CD4-positive, alpha-beta memory T cell (primary cell): ENCODE measurements at regions of chr2 and their contacts with region 1.

Region 1: GRCh38 chr2:172555522-172556283 is at the start of gene PDK1:
- DNase-seq: peak; percentile 90 to 94 (median 93)
- H3K4me3 ChIP-seq: peak within 1 kb of the TSS; percentile 62 to 82
- H3K4me3 Mint-ChIP-seq: peak within 1 kb of the TSS; percentile 90 to 97 (median 94)
- H3K27ac ChIP-seq: peak within 1 kb of the TSS; percentile 82
- H3K27ac Mint-ChIP-seq: peak within 1 kb of the TSS; percentile 78 to 96 (median 93)
- H3K4me1 ChIP-seq: peaks cover 31% of the 10 kb centered on the region
- H3K4me1 Mint-ChIP-seq: peaks cover 22 to 51% (median 38%) of the 10 kb centered on the region in 4 donors
- H3K27me3 ChIP-seq: no peaks in the 10 kb centered on the region
- H3K27me3 Mint-ChIP-seq: peaks cover 0 to 1% of the 10 kb centered on the region in 2 donors
- total RNA-seq, gene PDK1: 34.2 to 36.8 TPM

Region 2: DNA sequence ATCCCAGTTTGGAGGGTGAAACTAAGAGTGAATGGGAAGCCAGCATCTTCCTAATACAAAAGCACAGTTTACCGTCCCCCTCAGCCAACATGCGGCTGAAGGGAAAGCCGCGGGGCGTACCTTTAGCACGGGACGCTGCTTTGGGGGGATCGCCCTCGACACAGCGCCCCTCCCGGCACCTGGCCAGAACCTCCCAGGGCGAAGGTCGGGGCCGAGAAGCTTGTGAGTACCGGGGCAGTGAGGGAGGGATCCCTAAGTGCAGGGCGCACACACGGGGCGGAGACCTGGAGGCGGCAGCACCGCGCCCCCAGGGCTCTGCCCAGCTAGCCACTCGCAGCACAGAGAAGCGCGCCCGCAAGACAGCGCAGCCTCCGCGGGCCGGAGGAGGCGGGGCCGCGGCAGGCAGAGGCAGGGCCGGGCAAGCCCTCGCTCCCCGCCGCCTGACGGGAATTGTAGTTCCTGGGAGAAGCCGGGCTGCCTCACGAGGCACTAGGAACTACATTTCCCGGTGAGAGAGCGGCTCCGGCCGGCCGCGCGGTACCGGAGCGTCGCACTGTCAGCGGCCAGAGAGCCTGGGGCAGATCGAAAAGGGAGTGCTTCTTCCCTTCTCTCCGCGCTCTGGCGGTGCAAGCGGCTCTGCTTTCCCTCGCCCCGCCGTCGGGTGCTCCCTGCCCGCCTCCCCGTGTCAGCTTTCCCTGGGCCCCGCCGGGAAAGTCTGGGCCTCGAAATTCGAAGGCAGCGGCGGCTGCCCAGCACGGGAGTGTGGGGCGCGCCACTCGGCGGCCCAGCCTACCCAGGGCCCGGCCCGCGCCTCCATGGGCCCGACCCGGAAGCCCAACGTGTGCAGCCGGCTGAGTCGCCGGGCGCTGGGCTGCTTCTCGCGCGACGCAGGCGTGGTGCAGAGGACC is 1121.7 kb before region 1 on chr2 and contains the starts of genes DCAF17 and METTL8:
- CTCF ChIA-PET with region 1: no interaction called
- POLR2A ChIA-PET with region 1: no interaction called
- intact Hi-C with region 1: loop called (anchors 10 kb)
- DNase-seq: peak; percentile 92 to 95 (median 94)
- H3K4me3 ChIP-seq: peak within 1 kb of the TSS; percentile 40 to 82
- H3K4me3 Mint-ChIP-seq: peak within 1 kb of the TSS; percentile 84 to 92 (median 90)
- H3K27ac ChIP-seq: peak within 1 kb of the TSS; percentile 91
- H3K27ac Mint-ChIP-seq: peak within 1 kb of the TSS; percentile 79 to 98 (median 96)
- H3K4me1 ChIP-seq: peaks cover 30% of the 10 kb centered on the region
- H3K4me1 Mint-ChIP-seq: peaks cover 32 to 52% (median 40%) of the 10 kb centered on the region in 4 donors
- H3K27me3 ChIP-seq: no peaks in the 10 kb centered on the region
- H3K27me3 Mint-ChIP-seq: no peaks in the 10 kb centered on the region
- total RNA-seq, gene DCAF17: 26.6 to 30.3 TPM
- total RNA-seq, gene METTL8: 17.5 to 19.2 TPM

Region 3: DNA sequence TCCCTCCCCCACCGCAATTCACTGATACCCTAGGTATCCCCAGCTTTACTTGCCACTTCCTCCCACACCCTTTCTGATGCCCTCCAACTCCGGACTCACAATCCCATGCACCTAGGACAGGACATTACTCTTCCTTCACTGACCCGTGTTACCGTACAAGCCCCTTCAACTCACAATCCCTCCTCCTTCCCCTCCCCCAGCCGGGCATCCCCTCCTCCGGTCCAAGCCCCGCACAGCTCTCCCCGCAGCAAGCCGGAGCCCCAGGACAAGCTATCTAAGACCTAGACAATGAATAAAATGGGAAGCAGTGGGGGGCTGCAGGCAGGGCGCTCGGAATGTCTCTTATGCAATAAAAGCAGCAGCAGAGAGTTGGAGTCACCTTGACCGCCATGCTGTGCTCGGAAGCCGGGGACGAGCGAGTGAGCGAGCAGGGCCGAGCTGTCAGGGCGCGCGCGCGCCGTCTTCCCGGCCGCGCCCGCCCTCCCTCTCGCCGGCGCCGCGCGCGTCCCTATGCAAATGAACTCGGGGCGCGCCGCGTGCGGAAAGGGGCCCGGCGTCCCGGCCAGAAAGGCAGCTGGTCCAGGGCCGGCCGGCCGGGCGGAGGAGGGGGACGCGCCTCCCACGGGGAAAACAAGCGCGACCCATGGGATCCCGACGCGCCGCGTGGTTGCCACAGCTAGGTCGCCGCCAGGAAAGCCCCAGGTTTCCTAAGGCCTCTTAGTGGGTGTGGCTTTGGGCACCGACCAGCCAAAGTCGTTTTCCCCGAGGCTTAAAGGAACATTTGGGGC is 661.7 kb before region 1 on chr2 and contains the start of gene SLC25A12:
- CTCF ChIA-PET with region 1: no interaction called
- POLR2A ChIA-PET with region 1: interaction called, 3 read pairs
- intact Hi-C with region 1: loop called (anchors 1 kb)
- DNase-seq: peak; percentile 52 to 70 (median 61)
- H3K4me3 ChIP-seq: peak within 1 kb of the TSS; percentile 74 to 87
- H3K4me3 Mint-ChIP-seq: peak within 1 kb of the TSS; percentile 93 to 99 (median 98)
- H3K27ac ChIP-seq: peak within 1 kb of the TSS; percentile 66
- H3K27ac Mint-ChIP-seq: peak within 1 kb of the TSS; percentile 77 to 97 (median 92)
- H3K4me1 ChIP-seq: peaks cover 36% of the 10 kb centered on the region
- H3K4me1 Mint-ChIP-seq: peaks cover 28 to 45% (median 30%) of the 10 kb centered on the region in 4 donors
- H3K27me3 ChIP-seq: no peaks in the 10 kb centered on the region
- H3K27me3 Mint-ChIP-seq: peaks cover 0 to 2% of the 10 kb centered on the region in 2 donors
- total RNA-seq, gene SLC25A12: 14.6 to 14.9 TPM

Region 4: GRCh38 chr2:172172513-172173173 is 383.1 kb before region 1 on chr2:
- CTCF ChIA-PET with region 1: no interaction called
- POLR2A ChIA-PET with region 1: no interaction called
- intact Hi-C with region 1: loop called (anchors 10 kb)
- DNase-seq: peak in 4 of 5 donors; percentile 57 to 63 (median 60)
- H3K4me3 ChIP-seq: peak overlapping the region in 1 of 2 donors; percentile 40
- H3K4me3 Mint-ChIP-seq: peak overlapping the region; percentile 54 to 83 (median 72)
- H3K27ac ChIP-seq: no peak overlapping the region
- H3K27ac Mint-ChIP-seq: no peak overlapping the region
- H3K4me1 ChIP-seq: peaks cover 3% of the 10 kb centered on the region
- H3K4me1 Mint-ChIP-seq: peaks cover 3 to 6% (median 4%) of the 10 kb centered on the region in 4 donors
- H3K27me3 ChIP-seq: no peaks in the 10 kb centered on the region
- H3K27me3 Mint-ChIP-seq: peaks cover 0 to 4% of the 10 kb centered on the region in 2 donors

Region 5: DNA sequence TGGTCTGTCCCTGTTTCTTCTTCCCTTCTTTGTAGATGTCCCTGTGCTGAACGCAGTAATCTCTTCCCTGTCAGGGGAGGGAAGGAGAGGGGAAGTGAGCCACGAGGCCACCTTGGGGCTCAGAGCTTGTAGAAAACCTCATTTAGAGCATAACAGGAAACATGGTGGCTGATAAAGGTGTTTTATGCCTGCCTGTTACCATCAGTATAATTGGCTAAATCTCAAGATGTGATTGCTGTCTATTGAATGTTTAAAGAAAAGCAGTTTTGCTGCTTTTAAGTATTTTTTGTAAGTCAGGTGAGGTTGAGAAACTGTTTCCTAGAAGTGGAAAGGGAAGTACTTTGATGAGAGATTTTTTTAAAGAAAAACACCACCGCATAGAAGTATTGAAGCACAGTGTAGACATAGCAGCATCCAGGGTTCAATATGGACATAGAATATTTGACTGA is 59.5 kb before region 1 on chr2:
- CTCF ChIA-PET with region 1: interaction called, 5 read pairs
- POLR2A ChIA-PET with region 1: interaction called, 33 read pairs
- intact Hi-C with region 1: loop called (anchors 1 kb)
- DNase-seq: peak; percentile 34 to 65 (median 58)
- H3K4me3 ChIP-seq: peak overlapping the region in 1 of 2 donors; percentile 33
- H3K4me3 Mint-ChIP-seq: peak overlapping the region; percentile 72 to 84 (median 78)
- H3K27ac ChIP-seq: peak overlapping the region; percentile 12
- H3K27ac Mint-ChIP-seq: peak overlapping the region; percentile 78 to 96 (median 94)
- H3K4me1 ChIP-seq: peaks cover 62% of the 10 kb centered on the region
- H3K4me1 Mint-ChIP-seq: peaks cover 39 to 75% (median 58%) of the 10 kb centered on the region in 4 donors
- H3K27me3 ChIP-seq: no peaks in the 10 kb centered on the region
- H3K27me3 Mint-ChIP-seq: no peaks in the 10 kb centered on the region

Region 6: DNA sequence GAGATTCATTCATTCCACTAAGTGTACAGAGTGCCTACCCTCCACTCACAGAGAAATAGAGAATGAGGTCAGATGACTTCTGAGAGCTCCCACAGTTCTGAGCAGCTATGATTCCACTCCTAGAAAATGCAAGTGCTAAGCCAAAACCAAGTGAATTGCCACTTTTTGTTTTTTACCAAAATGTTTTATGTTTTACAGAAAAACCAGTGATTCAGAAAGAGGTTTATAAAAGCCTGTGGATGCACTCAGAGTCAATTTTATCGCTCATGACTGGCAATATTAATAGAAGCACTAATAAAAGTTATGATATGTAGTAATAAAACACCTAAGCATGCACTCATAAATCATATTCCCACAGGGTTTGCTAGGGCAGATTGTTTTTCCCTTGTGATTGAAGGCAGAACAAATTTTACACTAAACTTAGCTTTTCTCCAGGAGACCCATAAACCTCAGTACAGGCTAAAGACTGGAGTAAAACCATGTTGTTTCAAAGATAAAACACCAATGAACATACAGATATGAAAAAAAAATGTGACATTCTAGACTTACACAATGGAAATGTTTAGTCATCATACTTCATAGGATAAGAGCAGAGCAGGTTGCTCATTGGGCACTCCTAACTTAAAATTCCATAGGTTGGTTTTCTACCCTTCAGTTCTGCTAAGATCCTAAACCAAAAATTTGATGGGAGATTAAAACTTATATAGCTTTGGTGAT is 67.7 kb after region 1 on chr2:
- CTCF ChIA-PET with region 1: no interaction called
- POLR2A ChIA-PET with region 1: no interaction called
- intact Hi-C with region 1: no loop called
- DNase-seq: no peak
- H3K4me3 ChIP-seq: no peak overlapping the region
- H3K4me3 Mint-ChIP-seq: no peak overlapping the region
- H3K27ac ChIP-seq: no peak overlapping the region
- H3K27ac Mint-ChIP-seq: no peak overlapping the region
- H3K4me1 ChIP-seq: no peaks in the 10 kb centered on the region
- H3K4me1 Mint-ChIP-seq: no peaks in the 10 kb centered on the region
- H3K27me3 ChIP-seq: no peaks in the 10 kb centered on the region
- H3K27me3 Mint-ChIP-seq: no peaks in the 10 kb centered on the region

Region 7: DNA sequence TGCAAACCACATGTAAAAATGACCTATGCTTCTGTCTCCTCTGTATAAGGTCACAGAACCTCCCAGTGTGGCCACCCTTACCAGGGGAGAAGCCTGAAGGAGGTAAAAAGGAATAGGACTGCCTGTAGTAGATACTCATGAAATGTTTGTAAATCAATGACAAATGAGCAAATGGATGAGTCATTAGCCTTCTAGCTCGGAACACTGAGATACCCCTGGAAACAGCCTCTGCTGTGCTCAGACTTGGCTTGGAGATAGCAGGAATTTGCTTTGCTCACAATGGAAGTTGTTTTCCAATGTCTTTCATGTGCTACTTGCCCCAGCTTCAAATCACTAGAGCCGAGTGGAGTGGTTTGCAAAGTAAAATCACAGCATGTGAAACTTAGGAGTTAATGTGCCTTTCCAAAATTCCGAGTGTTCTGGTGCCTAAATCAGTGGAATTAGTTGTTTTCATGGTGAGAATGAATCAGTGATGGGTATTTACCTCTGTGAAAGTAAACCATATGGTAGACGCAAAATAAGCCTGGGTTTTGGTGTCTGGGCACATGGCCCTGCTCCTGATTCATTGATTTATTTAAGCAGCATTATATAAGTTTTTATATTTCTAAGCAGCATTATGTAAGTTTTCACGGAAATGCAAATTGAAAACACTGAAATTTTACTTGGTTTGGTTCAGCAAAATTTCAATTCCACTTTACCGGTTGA is 366.0 kb after region 1 on chr2:
- CTCF ChIA-PET with region 1: no interaction called
- POLR2A ChIA-PET with region 1: no interaction called
- intact Hi-C with region 1: no loop called
- DNase-seq: no peak
- H3K4me3 ChIP-seq: no peak overlapping the region
- H3K4me3 Mint-ChIP-seq: no peak overlapping the region
- H3K27ac ChIP-seq: no peak overlapping the region
- H3K27ac Mint-ChIP-seq: no peak overlapping the region
- H3K4me1 ChIP-seq: no peaks in the 10 kb centered on the region
- H3K4me1 Mint-ChIP-seq: no peaks in the 10 kb centered on the region
- H3K27me3 ChIP-seq: no peaks in the 10 kb centered on the region
- H3K27me3 Mint-ChIP-seq: peaks cover 6 to 11% of the 10 kb centered on the region in 2 donors